Activated CD4-positive, alpha-beta memory T cell treated with anti-CD3 and anti-CD28 coated beads, Interleukin-2, amount 10 ng/mL, durations not matched to agents 7 days and 5 days (primary cell): ENCODE measurements at regions of chr19 and their contacts with region 1.

Region 1: DNA sequence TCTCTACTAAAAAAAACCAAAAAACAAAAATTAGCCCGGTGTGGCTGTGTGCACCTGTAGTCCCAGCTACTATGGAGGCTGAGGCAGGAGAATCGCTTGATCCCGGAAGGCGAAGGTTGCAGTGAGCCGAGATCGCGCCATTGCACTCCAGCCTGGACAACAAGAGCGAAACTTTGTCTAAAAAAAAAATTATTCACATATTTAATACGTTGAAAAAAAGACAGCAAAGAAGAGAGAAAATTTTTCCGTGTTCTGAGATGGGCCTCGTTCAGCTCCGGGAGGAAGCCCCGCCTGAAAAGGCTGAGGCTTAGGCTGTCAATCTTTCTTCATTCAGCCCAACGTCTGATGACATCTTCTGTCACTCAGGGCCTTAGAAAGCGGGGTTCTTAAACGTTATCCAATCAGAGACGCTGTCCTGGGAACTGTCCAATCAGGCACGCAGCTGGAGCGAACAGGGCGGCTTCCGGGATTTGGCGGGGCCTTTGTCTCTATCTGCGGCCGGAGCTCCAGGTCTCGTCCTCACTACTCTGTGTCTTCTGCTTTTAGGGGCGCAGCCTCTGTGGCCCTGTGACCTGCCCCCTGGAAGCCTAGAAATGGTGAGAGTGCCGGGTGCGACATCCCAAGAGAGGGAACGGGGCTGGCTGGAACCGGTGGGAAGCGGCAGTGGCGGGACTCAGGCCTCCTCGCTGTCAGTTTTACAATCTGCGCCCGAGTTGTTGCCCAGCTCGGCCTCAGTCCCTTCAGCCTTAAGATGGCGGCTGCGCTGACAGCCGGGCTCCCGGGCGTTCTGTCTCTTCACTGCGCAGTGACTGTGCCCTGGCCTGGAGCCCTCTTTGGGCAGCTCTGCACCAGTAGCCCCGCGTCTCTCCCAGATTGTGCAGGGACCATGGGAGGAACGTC is at the start of gene ZNF726:
- DNase-seq: peak; percentile 89
- H3K4me3 Mint-ChIP-seq: peak within 1 kb of the TSS; percentile 93
- H3K27ac Mint-ChIP-seq: peak within 1 kb of the TSS; percentile 89
- H3K4me1 Mint-ChIP-seq: peaks cover 16% of the 10 kb centered on the region
- H3K27me3 Mint-ChIP-seq: no peaks in the 10 kb centered on the region
- total RNA-seq, gene ZNF726: 8.7 to 9.7 TPM

Region 2: GRCh38 chr19:23686621-23687423 is 227.8 kb before region 1 on chr19 and contains the start of gene ZNF675:
- CTCF ChIA-PET with region 1: interaction called, 3 read pairs
- POLR2A ChIA-PET with region 1: interaction called, 23 read pairs
- DNase-seq: peak; percentile 91
- H3K4me3 Mint-ChIP-seq: peak within 1 kb of the TSS; percentile 98
- H3K27ac Mint-ChIP-seq: peak within 1 kb of the TSS; percentile 96
- H3K4me1 Mint-ChIP-seq: peaks cover 18% of the 10 kb centered on the region
- H3K27me3 Mint-ChIP-seq: no peaks in the 10 kb centered on the region
- total RNA-seq, gene ZNF675: 18.1 to 19.9 TPM

Region 3: GRCh38 chr19:23867895-23868294 is 46.8 kb before region 1 on chr19:
- CTCF ChIA-PET with region 1: no interaction called
- POLR2A ChIA-PET with region 1: no interaction called
- DNase-seq: no peak
- H3K4me3 Mint-ChIP-seq: no peak overlapping the region
- H3K27ac Mint-ChIP-seq: no peak overlapping the region
- H3K4me1 Mint-ChIP-seq: no peaks in the 10 kb centered on the region
- H3K27me3 Mint-ChIP-seq: no peaks in the 10 kb centered on the region

Region 4: DNA sequence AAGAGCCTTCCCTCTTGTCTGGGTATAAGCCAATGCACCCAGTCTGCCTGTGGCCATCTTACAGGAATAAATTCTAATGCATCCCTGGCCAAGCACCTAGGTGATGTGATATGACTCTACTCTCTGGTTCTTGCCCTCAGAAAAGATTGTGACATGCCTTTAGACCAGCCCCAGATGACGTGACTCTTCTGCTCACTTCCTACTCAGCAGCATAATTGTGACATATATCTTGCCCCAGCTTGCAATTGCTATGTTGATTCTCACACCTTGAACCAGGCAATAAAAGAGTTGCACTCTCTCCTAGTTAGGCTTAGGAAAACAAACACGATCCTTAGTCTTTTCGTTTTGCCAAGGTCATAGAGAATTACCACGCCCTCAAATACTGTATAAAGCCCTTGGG is 13.3 kb before region 1 on chr19:
- CTCF ChIA-PET with region 1: no interaction called
- POLR2A ChIA-PET with region 1: no interaction called
- DNase-seq: no peak
- H3K4me3 Mint-ChIP-seq: no peak overlapping the region
- H3K27ac Mint-ChIP-seq: no peak overlapping the region
- H3K4me1 Mint-ChIP-seq: no peaks in the 10 kb centered on the region
- H3K27me3 Mint-ChIP-seq: no peaks in the 10 kb centered on the region

Region 5: DNA sequence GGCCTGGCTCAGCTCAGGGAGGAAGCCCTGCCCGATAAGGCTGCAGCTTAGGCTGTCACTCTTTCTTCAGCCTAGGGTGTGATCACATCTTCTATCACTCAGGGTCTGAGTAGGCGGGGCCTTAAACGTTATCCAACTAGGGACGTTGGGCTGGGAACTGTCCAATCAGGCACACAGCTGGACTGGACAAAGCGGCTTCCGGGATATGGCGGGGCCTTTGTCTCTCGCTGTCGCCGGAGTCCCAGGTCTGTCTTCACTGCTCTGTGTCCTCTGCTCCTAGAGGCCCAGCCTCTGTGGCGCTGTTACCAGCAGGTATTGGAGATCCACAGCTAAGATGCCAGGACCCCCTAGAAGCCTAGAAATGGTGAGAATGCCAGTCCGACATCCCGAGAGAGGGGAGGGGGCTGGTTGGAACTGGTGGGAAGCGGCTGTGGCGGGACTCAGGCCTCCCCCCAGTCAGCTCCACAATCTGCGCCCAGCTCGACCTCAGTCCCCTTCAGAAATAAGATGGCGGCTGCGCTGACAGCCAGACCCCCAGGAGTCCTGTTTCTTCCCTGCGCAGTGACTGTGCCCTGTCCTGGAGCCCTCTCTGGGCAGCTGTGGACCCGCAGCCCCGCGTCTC is 172.4 kb after region 1 on chr19 and contains the start of gene ZNF254:
- CTCF ChIA-PET with region 1: no interaction called
- POLR2A ChIA-PET with region 1: interaction called, 24 read pairs
- DNase-seq: peak; percentile 85
- H3K4me3 Mint-ChIP-seq: peak within 1 kb of the TSS; percentile 93
- H3K27ac Mint-ChIP-seq: peak within 1 kb of the TSS; percentile 92
- H3K4me1 Mint-ChIP-seq: peaks cover 11% of the 10 kb centered on the region
- H3K27me3 Mint-ChIP-seq: no peaks in the 10 kb centered on the region
- total RNA-seq, gene ZNF254: 9.9 to 10.2 TPM